ENCODE measurements at regions of chr11 and their contacts with region 1.

Region 1: GRCh38 chr11:36265793-36266628 is 23.2 kb downstream of the COMMD9 start:
- DNase-seq: peak; percentile 68
- H3K4me3 Mint-ChIP-seq: no peak overlapping the region
- H3K27ac Mint-ChIP-seq: no peak overlapping the region
- H3K4me1 Mint-ChIP-seq: no peaks in the 10 kb centered on the region
- H3K27me3 Mint-ChIP-seq: peaks cover 25% of the 10 kb centered on the region

Region 2: DNA sequence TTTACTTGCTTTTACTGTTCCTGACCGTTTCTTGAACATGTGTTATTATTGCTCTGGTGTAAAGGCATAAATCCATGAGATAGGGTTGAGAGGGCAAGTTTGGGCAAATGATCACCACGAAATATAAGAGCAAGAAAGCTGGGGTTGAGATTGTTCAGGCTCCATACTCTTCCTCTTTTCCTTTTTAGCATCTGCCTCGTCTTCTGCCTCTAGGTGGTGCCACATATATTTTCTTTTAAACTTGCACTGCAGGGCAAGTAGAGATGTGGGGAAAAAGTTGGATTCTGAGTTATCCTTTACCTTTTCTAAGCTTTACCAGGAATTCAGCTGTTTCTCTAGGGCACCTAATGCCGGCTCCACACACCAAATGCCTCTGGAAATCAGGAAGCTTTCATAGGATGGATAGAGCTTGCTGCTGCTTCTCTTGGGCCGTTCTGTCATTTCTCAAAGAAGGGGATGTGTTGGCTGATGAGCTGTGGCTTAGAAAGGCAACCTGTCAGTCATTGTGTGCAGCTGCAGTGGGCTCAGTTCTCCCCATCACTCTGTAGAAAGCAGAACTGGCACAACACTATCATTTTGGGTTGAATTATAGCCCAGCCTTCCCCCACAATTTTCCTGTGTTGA is 223.9 kb before region 1 on chr11:
- CTCF ChIA-PET with region 1: interaction called, 16 read pairs
- DNase-seq: no peak
- H3K4me3 Mint-ChIP-seq: no peak overlapping the region
- H3K27ac Mint-ChIP-seq: no peak overlapping the region
- H3K4me1 Mint-ChIP-seq: no peaks in the 10 kb centered on the region
- H3K27me3 Mint-ChIP-seq: peaks cover 10% of the 10 kb centered on the region

Measured in activated naive CD4-positive, alpha-beta T cell treated with anti-CD3 and anti-CD28 coated beads, Interleukin-2, amount 10 ng/mL, durations not matched to agents 7 days and 5 days (primary cell).